CD4-positive, alpha-beta T cell (primary cell): ENCODE measurements at regions of chr2 and their contacts with region 1.

Region 1: GRCh38 chr2:12728221-12728777 is 11.6 kb downstream of the TRIB2 start:
- DNase-seq: peak; percentile 24 to 82 (median 55)
- ATAC-seq: peak; percentile 84
- H3K4me3 ChIP-seq: peak overlapping the region; percentile 31
- H3K4me3 Mint-ChIP-seq: peak overlapping the region; percentile 81
- H3K27ac ChIP-seq: peak overlapping the region; percentile 47 to 51
- H3K27ac Mint-ChIP-seq: peak overlapping the region; percentile 81
- H3K4me1 ChIP-seq: peaks cover 85% of the 10 kb centered on the region
- H3K4me1 Mint-ChIP-seq: peaks cover 99% of the 10 kb centered on the region
- H3K27me3 ChIP-seq: no peaks in the 10 kb centered on the region
- H3K27me3 Mint-ChIP-seq: no peaks in the 10 kb centered on the region
- CTCF ChIP-seq: no peak

Region 2: DNA sequence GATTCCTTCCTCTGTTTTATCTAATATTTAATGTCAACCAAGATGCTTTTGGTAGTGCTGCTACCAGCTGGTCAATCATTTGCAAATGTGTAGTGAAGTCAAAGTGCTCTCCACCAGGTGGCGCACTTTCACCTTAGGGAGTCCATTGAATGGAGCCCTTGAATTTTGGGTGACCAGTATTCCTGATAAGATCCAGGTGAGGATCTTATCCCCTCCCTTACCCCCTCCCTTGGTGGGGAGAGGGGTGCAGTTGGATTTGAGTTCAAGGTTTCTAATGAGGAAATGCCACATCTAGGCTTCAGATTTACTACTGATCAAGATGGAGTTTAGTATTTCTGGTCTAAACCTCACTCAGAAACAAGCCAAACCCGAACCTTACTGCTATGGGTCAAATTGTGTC is 1250.3 kb before region 1 on chr2:
- CTCF ChIA-PET with region 1: no interaction called
- POLR2A ChIA-PET with region 1: no interaction called
- intact Hi-C with region 1: loop called in 1 of 2 experiments (anchors 10 kb)
- DNase-seq: peak; percentile 67 to 87 (median 75)
- ATAC-seq: peak; percentile 59
- H3K4me3 ChIP-seq: no peak overlapping the region
- H3K4me3 Mint-ChIP-seq: no peak overlapping the region
- H3K27ac ChIP-seq: no peak overlapping the region
- H3K27ac Mint-ChIP-seq: no peak overlapping the region
- H3K4me1 ChIP-seq: peaks cover 9% of the 10 kb centered on the region
- H3K4me1 Mint-ChIP-seq: peaks cover under 1% of the 10 kb centered on the region
- H3K27me3 ChIP-seq: peaks cover 22 to 28% of the 10 kb centered on the region in 2 experiments
- H3K27me3 Mint-ChIP-seq: peaks cover 28% of the 10 kb centered on the region
- CTCF ChIP-seq: peak; percentile 97

Region 3: DNA sequence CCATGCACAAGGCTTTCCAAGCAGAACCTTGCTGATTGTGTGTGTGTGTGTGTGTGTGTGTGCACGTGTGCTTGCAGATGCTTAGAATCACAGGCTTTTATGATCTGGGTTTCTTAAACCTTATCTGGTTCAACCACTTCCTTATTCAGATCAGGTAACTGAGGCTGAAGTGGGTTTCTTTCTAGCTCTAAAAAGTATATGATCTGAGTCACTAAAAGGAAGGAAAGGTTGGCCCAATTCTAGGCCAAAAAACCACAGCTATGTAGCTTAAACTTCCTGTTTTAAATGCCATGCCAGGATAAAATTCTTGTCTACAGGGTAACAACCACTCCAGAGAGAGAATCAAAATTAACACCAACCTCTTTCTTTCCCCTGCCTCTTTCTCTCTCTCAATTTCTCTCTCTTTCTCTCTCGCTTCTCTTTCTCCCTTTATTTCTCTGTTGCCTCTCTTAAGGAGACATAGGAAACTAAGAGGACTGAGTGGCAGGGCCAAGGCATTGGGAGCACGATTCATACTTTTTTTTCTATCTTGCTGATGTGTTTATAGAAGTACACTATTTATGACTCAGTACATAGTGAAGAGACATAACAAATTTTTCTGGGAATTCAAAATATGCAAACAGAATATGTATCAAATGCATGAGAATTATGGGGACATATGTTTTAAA is 128.8 kb after region 1 on chr2:
- CTCF ChIA-PET with region 1: no interaction called
- POLR2A ChIA-PET with region 1: interaction called, 10 read pairs
- intact Hi-C with region 1: no loop called
- DNase-seq: peak in 11 of 14 experiments; percentile 3 to 87 (median 22)
- ATAC-seq: peak; percentile 88
- H3K4me3 ChIP-seq: no peak overlapping the region
- H3K4me3 Mint-ChIP-seq: no peak overlapping the region
- H3K27ac ChIP-seq: no peak overlapping the region
- H3K27ac Mint-ChIP-seq: no peak overlapping the region
- H3K4me1 ChIP-seq: peaks cover 52% of the 10 kb centered on the region
- H3K4me1 Mint-ChIP-seq: peaks cover 12% of the 10 kb centered on the region
- H3K27me3 ChIP-seq: no peaks in the 10 kb centered on the region
- H3K27me3 Mint-ChIP-seq: no peaks in the 10 kb centered on the region
- CTCF ChIP-seq: no peak